Ascending aorta (tissue), 2 donors: ENCODE measurements at regions of chr2 and their contacts with region 1.

Region 1: DNA sequence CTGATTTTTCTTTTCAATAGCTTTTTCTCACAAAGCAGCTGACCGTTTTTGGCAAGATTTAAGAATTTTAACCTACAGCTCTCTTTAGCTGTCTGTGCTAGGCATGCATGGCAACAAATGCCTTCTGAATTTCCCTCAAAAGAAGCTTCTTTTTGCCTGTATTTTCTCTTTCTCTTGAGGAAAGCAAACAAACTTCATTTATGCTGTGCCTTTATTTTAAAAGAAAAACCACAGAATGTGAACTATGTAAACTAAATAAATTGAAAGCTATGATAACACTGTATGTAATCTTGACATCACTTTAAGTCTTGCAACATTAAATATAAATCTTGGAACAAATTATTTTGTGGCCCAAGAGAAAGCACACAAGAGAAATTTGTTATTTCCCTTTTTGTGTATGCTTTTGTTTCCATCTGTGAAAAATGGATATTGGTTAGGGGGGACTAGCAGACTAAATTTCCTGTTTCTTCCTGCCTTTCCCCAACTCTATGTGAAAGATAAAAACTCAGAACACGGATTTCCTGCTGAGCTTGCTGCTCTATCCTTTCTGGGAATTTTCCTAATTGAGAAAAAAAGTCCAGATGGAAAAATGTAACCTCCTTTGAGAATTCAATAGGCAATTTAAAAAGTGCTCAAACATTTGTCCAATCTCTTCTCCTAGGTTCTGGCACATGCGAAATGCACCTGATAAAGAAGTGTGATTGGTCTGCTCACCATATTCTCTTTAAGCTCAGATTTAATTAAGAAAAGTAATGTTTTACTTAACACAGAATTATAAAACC is 20.9 kb upstream of the TFPI start:
- DNase-seq: no peak
- H3K4me3 ChIP-seq: no peak overlapping the region
- H3K27ac ChIP-seq: no peak overlapping the region
- H3K4me1 ChIP-seq: no peaks in the 10 kb centered on the region
- H3K27me3 ChIP-seq: no peaks in the 10 kb centered on the region
- CTCF ChIP-seq: no peak

Region 2: DNA sequence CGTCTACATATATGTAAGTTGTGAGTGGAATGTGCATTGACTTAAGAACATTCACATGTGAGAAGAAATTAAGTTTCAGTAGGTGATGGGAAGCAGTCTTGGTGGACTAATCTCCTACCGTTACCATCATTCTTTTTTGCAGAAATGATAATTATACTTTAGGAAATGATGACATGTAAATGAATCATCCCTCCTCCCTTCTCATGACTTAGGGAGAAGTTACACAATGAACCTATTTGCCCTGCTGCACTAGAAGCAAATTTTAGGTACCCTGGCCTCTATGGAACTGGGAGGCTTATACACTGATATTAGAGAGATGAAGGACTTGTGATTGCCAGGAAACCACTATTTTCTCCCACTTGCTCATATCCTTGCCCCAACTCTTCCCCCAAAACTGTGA is 341.3 kb before region 1 on chr2:
- intact Hi-C with region 1: no loop called
- DNase-seq: no peak
- H3K4me3 ChIP-seq: no peak overlapping the region
- H3K27ac ChIP-seq: no peak overlapping the region
- H3K4me1 ChIP-seq: no peaks in the 10 kb centered on the region
- H3K27me3 ChIP-seq: no peaks in the 10 kb centered on the region
- CTCF ChIP-seq: no peak

Region 3: GRCh38 chr2:187541086-187542085 is 33.8 kb before region 1 on chr2:
- intact Hi-C with region 1: loop called (anchors 5 kb)
- DNase-seq: no peak
- H3K4me3 ChIP-seq: peak overlapping the region in 1 of 2 donors; percentile 1
- H3K27ac ChIP-seq: peak overlapping the region; percentile 58 to 63
- H3K4me1 ChIP-seq: peaks cover 0 to 8% of the 10 kb centered on the region in 2 donors
- H3K27me3 ChIP-seq: no peaks in the 10 kb centered on the region
- CTCF ChIP-seq: no peak

Region 4: DNA sequence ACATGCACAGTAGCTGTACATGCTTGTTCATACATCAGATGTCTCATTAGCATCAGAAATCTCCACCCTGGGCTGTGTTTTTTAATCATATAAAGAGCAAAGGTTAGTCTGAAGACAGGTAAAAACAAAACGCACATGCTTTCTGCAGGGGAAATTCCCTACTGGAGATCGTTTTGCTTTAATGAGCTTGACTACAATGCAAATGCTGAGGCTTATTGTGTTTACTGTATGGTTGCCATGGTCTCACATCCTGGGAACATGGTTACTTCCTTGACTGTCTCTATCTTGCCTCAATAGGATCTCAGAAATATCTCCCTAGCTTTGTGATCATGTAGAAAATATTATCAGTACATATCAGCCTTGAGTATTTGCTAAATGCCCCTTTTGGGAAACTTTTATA is 315.5 kb after region 1 on chr2:
- intact Hi-C with region 1: no loop called
- DNase-seq: no peak
- H3K4me3 ChIP-seq: no peak overlapping the region
- H3K27ac ChIP-seq: no peak overlapping the region
- H3K4me1 ChIP-seq: no peaks in the 10 kb centered on the region
- H3K27me3 ChIP-seq: no peaks in the 10 kb centered on the region
- CTCF ChIP-seq: no peak